Activated B cell treated with CpG ODN at 0.5 μM for 24 hours (primary cell): ENCODE measurements at regions of chr17 and their contacts with region 1.

Region 1: DNA sequence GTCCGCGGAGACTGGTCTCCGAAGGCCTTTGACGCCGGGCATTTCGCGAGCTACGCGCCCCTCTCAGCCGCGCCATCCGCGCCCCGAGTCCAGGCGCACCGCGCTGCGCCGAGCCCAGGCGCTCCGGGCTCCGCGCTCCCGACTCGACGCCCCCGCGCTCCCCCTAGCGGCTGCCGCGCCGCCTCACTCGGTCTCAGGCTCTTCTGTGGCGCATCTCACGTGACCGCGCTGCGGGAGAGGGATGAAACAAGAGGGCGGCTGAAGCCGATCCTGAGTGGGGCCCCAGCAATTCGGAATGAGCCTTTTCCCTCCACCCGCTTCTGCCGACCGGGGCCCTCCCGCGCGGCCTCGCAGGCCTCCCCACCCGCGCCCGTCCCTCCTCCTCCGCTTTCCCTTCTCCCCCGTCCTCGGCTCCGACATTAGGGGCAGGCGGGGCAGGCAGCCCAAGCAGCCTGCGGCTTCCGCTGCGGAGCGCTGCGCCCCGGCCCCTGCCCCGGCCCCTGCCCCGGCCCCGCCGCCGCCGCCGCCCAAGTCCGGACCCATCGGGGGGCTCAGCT is 42.5 kb upstream of the AMZ2 start:
- DNase-seq: peak; percentile 95
- ATAC-seq: peak; percentile 79
- H3K4me3 Mint-ChIP-seq: peak overlapping the region; percentile 89
- H3K27ac Mint-ChIP-seq: peak overlapping the region; percentile 94
- H3K4me1 Mint-ChIP-seq: peaks cover 41% of the 10 kb centered on the region
- H3K27me3 Mint-ChIP-seq: peaks cover 2% of the 10 kb centered on the region
- CTCF ChIP-seq: peak; percentile 28

Region 2: GRCh38 chr17:68035523-68036303 is 169.6 kb before region 1 on chr17 and contains the start of gene KPNA2:
- CTCF ChIA-PET with region 1: no interaction called
- POLR2A ChIA-PET with region 1: interaction called, 5 read pairs
- intact Hi-C with region 1: loop called (anchors 1 kb)
- DNase-seq: peak; percentile 80
- ATAC-seq: peak; percentile 89
- H3K4me3 Mint-ChIP-seq: peak within 1 kb of the TSS; percentile 93
- H3K27ac Mint-ChIP-seq: peak within 1 kb of the TSS; percentile 92
- H3K4me1 Mint-ChIP-seq: peaks cover 11% of the 10 kb centered on the region
- H3K27me3 Mint-ChIP-seq: no peaks in the 10 kb centered on the region
- CTCF ChIP-seq: no peak
- total RNA-seq, gene KPNA2: 49.5 and 49.9 TPM in 2 replicates

Region 3: DNA sequence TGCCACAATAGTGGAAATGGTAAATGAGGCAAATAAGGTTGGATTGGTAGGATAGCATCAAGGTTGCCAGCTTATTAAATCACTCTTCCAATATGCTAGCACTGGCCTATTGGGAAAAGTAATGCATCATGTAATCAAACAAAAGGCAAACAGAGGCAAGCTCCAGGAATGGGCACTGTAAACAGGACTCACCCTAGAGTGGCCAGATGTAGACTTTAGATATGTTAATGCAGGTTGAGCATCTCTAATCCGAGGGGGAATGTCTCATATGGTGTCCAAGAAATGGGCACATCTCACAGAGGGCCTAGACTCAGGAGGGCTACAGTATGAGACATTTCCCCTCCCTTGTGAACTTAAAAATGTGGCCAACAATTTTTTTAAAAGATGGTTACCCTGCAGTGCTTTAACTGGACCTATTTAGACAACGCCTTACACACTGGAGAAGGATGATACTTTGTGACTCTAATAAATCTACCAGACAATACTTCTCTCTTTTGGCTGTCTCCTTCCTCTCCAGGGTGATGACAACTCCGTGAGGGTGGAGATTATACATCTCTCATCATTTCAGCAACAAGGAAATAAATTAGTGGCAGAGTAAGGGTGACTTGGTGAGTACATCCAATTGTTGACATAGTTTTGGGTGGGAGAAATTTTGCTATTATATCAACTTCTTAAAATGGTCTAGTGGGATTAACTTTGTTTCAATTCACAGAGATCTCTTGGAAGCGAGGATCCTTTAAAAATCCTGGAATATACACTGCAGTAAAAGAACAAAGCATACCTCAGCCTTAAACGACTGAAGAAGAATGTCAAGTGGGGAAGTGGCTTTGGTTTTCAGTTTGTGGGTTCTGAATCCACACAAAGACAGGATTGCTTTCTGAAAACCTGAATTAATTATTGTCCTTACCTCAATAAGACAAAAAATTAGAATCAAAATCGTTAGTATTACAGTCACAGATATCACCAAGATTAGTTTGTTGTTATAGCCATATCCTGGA is 80.2 kb before region 1 on chr17:
- CTCF ChIA-PET with region 1: no interaction called
- POLR2A ChIA-PET with region 1: no interaction called
- intact Hi-C with region 1: no loop called
- DNase-seq: no peak
- ATAC-seq: no peak
- H3K4me3 Mint-ChIP-seq: no peak overlapping the region
- H3K27ac Mint-ChIP-seq: no peak overlapping the region
- H3K4me1 Mint-ChIP-seq: no peaks in the 10 kb centered on the region
- H3K27me3 Mint-ChIP-seq: no peaks in the 10 kb centered on the region
- CTCF ChIP-seq: no peak

Region 4: GRCh38 chr17:68172461-68172954 is 32.8 kb before region 1 on chr17:
- CTCF ChIA-PET with region 1: interaction called, 77 read pairs
- POLR2A ChIA-PET with region 1: interaction called, 12 read pairs
- intact Hi-C with region 1: loop called (anchors 1 kb)
- DNase-seq: peak; percentile 58
- ATAC-seq: peak; percentile 97
- H3K4me3 Mint-ChIP-seq: no peak overlapping the region
- H3K27ac Mint-ChIP-seq: no peak overlapping the region
- H3K4me1 Mint-ChIP-seq: peaks cover 6% of the 10 kb centered on the region
- H3K27me3 Mint-ChIP-seq: no peaks in the 10 kb centered on the region
- CTCF ChIP-seq: peak; percentile 91

Region 5: GRCh38 chr17:68228817-68229572 is 23.7 kb after region 1 on chr17:
- CTCF ChIA-PET with region 1: interaction called, 3 read pairs
- POLR2A ChIA-PET with region 1: interaction called, 134 read pairs
- intact Hi-C with region 1: no loop called
- DNase-seq: no peak
- ATAC-seq: no peak
- H3K4me3 Mint-ChIP-seq: no peak overlapping the region
- H3K27ac Mint-ChIP-seq: peak overlapping the region; percentile 85
- H3K4me1 Mint-ChIP-seq: peaks cover 80% of the 10 kb centered on the region
- H3K27me3 Mint-ChIP-seq: no peaks in the 10 kb centered on the region
- CTCF ChIP-seq: no peak

Region 6: DNA sequence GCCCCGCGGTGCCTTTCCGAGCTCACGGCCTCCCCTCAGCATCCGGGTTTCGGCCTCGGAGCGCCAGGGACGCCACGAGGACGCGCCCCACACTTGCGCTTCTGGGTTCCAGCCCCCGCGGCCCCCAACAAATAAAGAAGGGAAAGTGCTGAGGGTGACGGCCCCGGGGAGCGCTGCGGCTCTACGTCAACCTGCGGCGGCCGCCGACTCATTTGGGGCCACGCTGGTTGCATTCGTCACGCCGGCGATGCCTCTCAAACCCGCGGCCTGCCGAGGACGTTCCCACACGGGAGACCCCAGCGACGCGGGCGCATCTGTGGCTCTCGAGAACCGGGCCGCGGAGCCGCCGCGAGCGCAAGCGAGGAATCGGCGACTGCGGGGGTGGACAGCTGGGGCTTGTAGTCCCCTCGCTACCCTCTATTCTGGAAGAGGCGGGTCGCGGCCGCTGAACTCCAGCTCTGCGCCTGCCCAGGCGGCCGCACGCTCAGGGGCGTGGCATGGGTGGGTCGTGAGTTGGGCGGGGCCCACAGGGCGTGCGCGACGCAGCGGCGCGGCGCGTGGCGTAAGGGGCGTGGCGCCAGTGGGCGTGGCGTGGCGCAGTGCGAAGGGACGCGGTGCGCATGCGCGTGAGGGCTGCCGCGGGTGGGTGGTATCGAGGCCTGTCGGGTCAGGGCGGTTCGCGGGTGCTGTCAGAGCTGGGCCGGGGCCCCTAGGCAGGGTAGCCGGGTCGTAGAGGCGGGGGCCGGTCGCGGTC is 42.3 kb after region 1 on chr17 and contains the start of gene AMZ2:
- CTCF ChIA-PET with region 1: interaction called, 15 read pairs
- POLR2A ChIA-PET with region 1: interaction called, 145 read pairs
- intact Hi-C with region 1: loop called (anchors 1 kb)
- DNase-seq: peak; percentile 100
- ATAC-seq: peak; percentile 87
- H3K4me3 Mint-ChIP-seq: peak within 1 kb of the TSS; percentile 92
- H3K27ac Mint-ChIP-seq: peak within 1 kb of the TSS; percentile 95
- H3K4me1 Mint-ChIP-seq: peaks cover 53% of the 10 kb centered on the region
- H3K27me3 Mint-ChIP-seq: no peaks in the 10 kb centered on the region
- CTCF ChIP-seq: no peak
- total RNA-seq, gene AMZ2: 42.1 and 55.4 TPM in 2 replicates

Region 7: DNA sequence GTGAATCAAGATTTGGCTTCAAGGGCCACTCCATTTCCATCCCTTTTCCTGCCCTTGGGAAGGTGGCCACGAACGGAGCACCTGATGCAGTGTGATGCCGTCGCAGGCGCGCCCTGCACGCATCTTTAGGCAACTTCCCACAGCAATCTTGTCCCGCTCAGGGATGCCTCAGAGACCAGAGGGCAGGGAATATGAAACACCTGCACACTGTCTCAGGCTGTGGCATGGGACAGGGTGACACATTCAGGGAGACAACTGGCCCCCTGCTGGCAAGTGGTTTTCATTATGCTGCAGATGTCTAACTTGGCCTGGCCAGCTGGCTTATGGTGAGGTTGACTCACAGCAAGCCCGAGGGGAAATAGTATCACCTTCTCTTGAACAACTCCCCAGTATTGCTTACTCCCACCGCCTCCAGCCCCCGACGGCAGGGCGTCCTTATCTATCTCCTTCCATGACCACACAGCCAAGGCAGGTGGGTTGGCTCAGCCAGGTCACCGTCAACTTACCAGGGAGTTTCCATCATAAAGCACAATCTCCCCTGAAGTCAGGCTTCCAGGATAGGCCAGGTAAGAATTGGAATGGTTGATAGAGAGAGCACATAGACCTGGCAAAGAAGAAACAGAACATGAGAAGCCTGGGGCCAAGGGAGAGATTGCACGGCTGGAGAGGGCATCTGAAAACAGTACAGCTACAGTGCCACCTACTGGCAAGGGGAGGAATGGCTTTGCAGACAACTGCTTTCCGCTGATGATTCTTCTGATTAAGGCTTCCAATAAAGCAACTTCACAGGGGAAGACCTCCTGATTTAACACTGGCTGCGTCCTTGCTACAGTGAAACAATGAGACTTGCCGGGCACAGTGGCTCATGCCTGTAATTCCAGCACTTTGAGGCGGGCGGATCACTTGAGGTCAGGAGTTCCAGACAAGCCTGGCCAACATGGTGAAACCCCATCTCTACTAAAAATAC is 230.8 kb after region 1 on chr17:
- CTCF ChIA-PET with region 1: interaction called, 4 read pairs
- POLR2A ChIA-PET with region 1: interaction called, 4 read pairs
- intact Hi-C with region 1: loop called (anchors 1 kb)
- DNase-seq: peak; percentile 60
- ATAC-seq: peak; percentile 78
- H3K4me3 Mint-ChIP-seq: no peak overlapping the region
- H3K27ac Mint-ChIP-seq: peak overlapping the region; percentile 54
- H3K4me1 Mint-ChIP-seq: peaks cover 50% of the 10 kb centered on the region
- H3K27me3 Mint-ChIP-seq: no peaks in the 10 kb centered on the region
- CTCF ChIP-seq: peak; percentile 61